Calu3 (cell line): ENCODE measurements at regions of chr10 and their contacts with region 1.

Region 1: DNA sequence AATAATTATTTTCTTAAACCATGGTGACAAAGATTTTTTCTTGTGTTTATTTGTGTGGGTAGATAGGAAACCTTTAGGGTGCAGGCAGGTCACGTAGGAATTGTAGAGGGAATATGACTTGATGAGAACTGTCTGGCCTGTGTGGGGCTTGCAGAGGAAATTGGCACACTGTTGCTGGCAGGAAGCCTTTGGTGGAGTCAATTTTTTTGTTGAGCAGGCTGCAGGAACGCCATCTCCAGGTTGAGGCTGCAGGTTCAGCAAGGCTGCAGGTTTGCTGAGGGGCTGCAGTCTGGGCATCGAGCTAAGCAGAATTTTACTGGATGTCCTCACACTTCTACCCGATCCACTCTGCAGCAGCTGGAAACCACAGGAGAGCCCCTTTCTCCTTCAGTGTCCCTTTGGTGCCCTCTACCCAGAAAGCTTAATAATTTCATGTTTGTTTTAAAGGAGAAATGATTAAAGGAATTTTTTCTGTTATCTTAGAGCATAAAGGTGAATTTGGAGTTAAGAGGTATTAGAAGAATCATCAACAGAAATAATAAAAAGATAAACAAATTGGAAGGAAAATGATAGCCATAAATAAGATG is 37.0 kb downstream of the TBC1D12 start:
- DNase-seq: peak; percentile 12
- H3K4me3 Mint-ChIP-seq: no peak overlapping the region
- H3K27ac Mint-ChIP-seq: no peak overlapping the region
- H3K4me1 Mint-ChIP-seq: peaks cover 6% of the 10 kb centered on the region
- H3K27me3 Mint-ChIP-seq: no peaks in the 10 kb centered on the region
- CTCF ChIP-seq: no peak

Region 2: DNA sequence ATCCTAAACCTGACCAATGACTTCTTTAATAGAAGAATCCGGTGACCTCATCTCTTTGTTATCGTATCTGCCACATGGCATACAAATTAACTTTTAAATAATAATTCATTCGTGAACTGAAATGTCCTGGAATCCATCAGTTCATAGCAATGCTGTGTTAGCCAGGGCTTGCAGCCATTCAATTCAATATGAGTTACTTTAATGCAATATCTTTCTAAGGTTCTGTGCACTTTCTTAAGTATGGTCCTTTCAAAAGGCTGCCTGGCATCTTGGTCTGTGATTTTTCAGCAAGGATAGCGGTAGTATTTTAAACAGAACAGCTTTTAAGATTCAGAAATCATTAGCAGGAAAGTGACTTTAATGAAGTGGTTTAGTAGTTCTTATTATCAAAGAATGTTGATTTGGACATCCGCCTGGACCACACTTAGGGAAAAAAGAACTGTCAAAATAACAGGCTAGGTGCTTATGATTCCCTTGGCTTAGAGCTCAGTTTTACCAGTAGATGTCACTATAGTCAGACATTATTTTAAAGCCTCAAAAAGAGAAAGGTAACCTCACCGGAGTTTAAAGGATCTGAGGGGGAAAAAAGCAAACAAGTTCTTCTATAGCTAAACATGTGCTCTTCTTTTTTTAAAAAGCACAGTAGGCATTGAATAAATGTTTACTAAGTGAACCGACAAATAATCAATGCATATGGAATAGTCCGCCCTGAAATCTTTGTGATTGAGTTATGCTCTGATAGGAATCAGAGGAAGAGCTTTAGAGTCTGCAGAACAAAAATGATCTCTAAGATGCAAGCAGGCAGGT is 522.9 kb before region 1 on chr10:
- CTCF ChIA-PET with region 1: interaction called, 13 read pairs
- intact Hi-C with region 1: loop called (anchors 10 kb)
- DNase-seq: no peak
- H3K4me3 Mint-ChIP-seq: no peak overlapping the region
- H3K27ac Mint-ChIP-seq: no peak overlapping the region
- H3K4me1 Mint-ChIP-seq: no peaks in the 10 kb centered on the region
- H3K27me3 Mint-ChIP-seq: no peaks in the 10 kb centered on the region
- CTCF ChIP-seq: peak; percentile 36

Region 3: GRCh38 chr10:94240901-94241300 is 198.5 kb before region 1 on chr10:
- CTCF ChIA-PET with region 1: interaction called, 10 read pairs
- intact Hi-C with region 1: no loop called
- DNase-seq: no peak
- H3K4me3 Mint-ChIP-seq: no peak overlapping the region
- H3K27ac Mint-ChIP-seq: no peak overlapping the region
- H3K4me1 Mint-ChIP-seq: peaks cover 8% of the 10 kb centered on the region
- H3K27me3 Mint-ChIP-seq: no peaks in the 10 kb centered on the region
- CTCF ChIP-seq: no peak

Region 4: DNA sequence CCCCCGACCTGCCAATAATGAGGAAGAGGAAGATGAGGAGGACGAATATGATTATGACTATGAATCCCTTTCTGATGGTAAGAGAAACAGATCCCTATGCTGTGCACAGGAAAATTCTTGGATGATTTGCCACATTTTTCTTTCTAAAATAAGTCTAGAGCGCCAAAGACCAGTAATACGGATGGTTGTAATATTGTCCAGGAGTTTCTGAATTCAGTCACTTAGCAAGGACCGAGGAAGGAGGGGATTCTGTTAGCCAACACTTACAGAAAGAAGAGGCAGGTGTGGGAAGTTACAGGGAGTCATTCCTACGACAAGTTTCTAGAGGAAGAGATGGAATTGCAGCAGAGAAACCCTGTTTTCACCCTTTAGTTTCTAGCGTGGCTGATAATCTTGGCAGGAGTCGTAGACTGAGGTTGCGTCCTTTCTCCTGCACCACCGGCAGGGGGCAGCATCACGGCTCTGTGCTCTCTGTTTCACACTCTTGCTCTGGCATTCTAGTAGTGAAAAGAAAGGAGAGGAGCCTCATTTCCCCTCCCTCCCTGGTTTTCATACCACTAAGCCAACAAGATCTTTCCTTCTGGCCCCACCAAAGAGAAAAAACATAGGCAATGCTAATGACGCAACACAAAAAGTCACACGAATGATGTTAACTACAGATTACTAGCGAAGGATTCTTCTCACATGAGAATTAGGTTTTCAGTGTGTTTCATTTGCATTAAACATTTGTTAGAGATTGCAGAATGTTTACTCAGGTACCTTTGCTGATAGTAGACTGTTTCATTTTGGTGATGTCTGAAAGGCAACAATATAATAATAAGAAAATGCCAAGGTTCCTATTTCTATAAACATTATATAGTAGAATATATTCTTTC is 159.3 kb before region 1 on chr10:
- CTCF ChIA-PET with region 1: no interaction called
- intact Hi-C with region 1: loop called (anchors 2 kb)
- DNase-seq: peak; percentile 62
- H3K4me3 Mint-ChIP-seq: no peak overlapping the region
- H3K27ac Mint-ChIP-seq: no peak overlapping the region
- H3K4me1 Mint-ChIP-seq: no peaks in the 10 kb centered on the region
- H3K27me3 Mint-ChIP-seq: peaks cover 13% of the 10 kb centered on the region
- CTCF ChIP-seq: peak; percentile 66

Region 5: DNA sequence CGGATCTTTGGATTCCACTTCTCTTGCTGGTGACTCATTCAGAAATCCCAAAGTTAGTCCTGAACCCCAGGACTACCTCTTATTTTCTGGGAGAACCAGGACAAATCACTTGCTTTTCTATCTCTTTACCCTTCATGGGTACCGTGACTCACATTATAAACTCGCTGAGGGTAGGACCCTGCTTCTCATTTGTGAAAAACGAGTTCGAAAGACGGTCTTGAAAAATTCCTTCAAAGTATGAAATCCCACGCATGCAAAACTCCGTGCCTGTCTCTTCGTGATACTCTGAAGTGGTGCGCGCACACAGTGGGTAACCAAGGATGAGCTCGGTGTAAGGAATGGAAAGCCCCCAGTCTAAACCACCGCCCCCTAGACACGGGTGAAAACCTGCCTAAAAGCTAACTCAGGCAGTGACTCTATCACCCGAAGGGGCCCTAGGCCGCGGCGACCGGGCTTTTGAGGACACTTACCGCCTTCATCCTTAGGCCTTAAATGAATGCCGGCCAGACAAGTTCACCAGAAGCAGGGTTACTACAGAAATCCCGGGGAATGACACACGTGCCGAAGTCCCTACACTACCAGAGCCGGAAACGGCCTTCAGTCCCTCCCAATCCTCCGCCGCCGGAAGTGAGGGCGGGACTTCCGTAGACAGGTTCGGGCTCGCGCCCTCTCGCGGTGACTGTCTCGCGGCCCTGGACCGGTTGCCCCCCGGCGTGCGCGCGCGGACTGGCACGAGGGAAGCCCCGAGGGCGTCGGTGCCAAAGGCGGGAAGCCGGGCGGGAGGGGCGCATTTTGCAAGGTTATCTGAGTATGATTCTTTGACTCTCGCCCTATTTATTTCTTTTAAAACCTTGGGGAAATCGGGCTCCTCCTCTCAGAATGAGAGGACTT is 76.8 kb before region 1 on chr10 and contains the start of gene NOC3L:
- CTCF ChIA-PET with region 1: interaction called, 8 read pairs
- intact Hi-C with region 1: loop called (anchors 1 kb)
- DNase-seq: peak; percentile 93
- H3K4me3 Mint-ChIP-seq: peak within 1 kb of the TSS; percentile 77
- H3K27ac Mint-ChIP-seq: peak within 1 kb of the TSS; percentile 67
- H3K4me1 Mint-ChIP-seq: peaks cover 13% of the 10 kb centered on the region
- H3K27me3 Mint-ChIP-seq: no peaks in the 10 kb centered on the region
- CTCF ChIP-seq: peak; percentile 61
- total RNA-seq, gene NOC3L: 18.4 and 21.8 TPM in 2 replicates